ENCODE measurements at regions of chr1 and their contacts with region 1.

Region 1: GRCh38 chr1:185317034-185317885 is at the start of gene IVNS1ABP:
- DNase-seq: peak; percentile 94 to 97 (median 96)
- H3K4me3 ChIP-seq: peak within 1 kb of the TSS; percentile 82 to 90
- H3K4me3 Mint-ChIP-seq: peak within 1 kb of the TSS; percentile 93 to 99 (median 97)
- H3K27ac ChIP-seq: peak within 1 kb of the TSS; percentile 99
- H3K27ac Mint-ChIP-seq: peak within 1 kb of the TSS; percentile 99 to 100 (median 99)
- H3K4me1 ChIP-seq: peaks cover 47% of the 10 kb centered on the region
- H3K4me1 Mint-ChIP-seq: peaks cover 29 to 58% (median 47%) of the 10 kb centered on the region in 4 donors
- H3K27me3 ChIP-seq: no peaks in the 10 kb centered on the region
- H3K27me3 Mint-ChIP-seq: no peaks in the 10 kb centered on the region
- total RNA-seq, gene IVNS1ABP: 179 to 187 TPM

Region 2: GRCh38 chr1:184399192-184399847 is 917.9 kb before region 1 on chr1:
- CTCF ChIA-PET with region 1: no interaction called
- POLR2A ChIA-PET with region 1: no interaction called
- intact Hi-C with region 1: no loop called
- DNase-seq: no peak
- H3K4me3 ChIP-seq: no peak overlapping the region
- H3K4me3 Mint-ChIP-seq: no peak overlapping the region
- H3K27ac ChIP-seq: no peak overlapping the region
- H3K27ac Mint-ChIP-seq: no peak overlapping the region
- H3K4me1 ChIP-seq: no peaks in the 10 kb centered on the region
- H3K4me1 Mint-ChIP-seq: no peaks in the 10 kb centered on the region
- H3K27me3 ChIP-seq: peaks cover 3% of the 10 kb centered on the region
- H3K27me3 Mint-ChIP-seq: peaks cover 12 to 23% of the 10 kb centered on the region in 2 donors

Region 3: DNA sequence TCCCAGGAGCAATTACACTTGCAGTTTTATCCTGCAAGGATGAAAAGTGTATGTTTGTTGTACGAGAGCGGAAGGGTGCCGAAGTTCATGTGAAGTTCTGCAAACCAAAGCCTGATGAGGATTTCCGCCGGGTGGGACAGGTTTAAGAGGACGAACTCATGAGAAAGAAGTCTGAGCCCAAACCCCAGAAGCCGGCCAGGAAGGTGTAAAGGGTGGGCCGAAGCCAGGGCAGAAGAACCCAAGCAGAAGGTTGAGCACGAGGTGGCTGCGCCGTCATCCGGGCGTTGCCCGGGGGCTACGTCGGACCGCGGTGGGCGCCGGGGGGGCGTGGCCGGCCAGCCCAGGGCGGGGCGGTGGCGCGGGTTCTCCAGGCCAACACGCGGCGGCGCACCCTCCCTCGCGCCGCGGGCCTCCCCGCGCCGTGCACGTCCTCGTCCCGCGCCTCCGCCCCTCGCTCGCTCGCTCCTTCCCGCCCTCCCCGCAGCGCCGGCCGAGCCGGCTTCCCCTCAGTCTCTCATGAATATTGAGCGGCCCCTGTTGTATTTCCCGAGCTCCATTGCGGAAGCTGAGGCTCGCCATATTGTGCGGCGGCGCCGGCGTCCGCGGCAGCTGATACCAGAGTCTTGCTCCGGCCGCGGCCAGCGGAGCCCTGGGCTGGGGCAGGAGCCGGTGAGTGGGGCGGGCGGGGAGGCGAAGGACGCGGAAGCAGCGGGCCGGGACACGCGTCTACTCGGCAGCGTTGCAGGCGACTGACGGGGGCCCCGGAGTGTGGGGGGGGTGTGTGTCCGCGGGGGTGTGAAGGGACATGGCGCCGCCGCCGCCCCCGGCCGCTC is 272.1 kb before region 1 on chr1 and contains the start of gene RNF2:
- CTCF ChIA-PET with region 1: no interaction called
- POLR2A ChIA-PET with region 1: interaction called, 5 read pairs
- intact Hi-C with region 1: loop called (anchors 1 kb)
- DNase-seq: peak; percentile 76 to 88 (median 83)
- H3K4me3 ChIP-seq: peak within 1 kb of the TSS; percentile 72 to 78
- H3K4me3 Mint-ChIP-seq: peak within 1 kb of the TSS; percentile 94 to 99 (median 96)
- H3K27ac ChIP-seq: peak within 1 kb of the TSS; percentile 71
- H3K27ac Mint-ChIP-seq: peak within 1 kb of the TSS; percentile 88 to 98 (median 96)
- H3K4me1 ChIP-seq: peaks cover 31% of the 10 kb centered on the region
- H3K4me1 Mint-ChIP-seq: peaks cover 31 to 53% (median 43%) of the 10 kb centered on the region in 4 donors
- H3K27me3 ChIP-seq: no peaks in the 10 kb centered on the region
- H3K27me3 Mint-ChIP-seq: no peaks in the 10 kb centered on the region
- total RNA-seq, gene RNF2: 27.0 TPM

Region 4: GRCh38 chr1:185257947-185258203 is 59.4 kb before region 1 on chr1:
- CTCF ChIA-PET with region 1: no interaction called
- POLR2A ChIA-PET with region 1: interaction called, 13 read pairs
- intact Hi-C with region 1: no loop called
- DNase-seq: no peak
- H3K4me3 ChIP-seq: no peak overlapping the region
- H3K4me3 Mint-ChIP-seq: peak overlapping the region in 7 of 8 donors; percentile 35 to 77 (median 59)
- H3K27ac ChIP-seq: no peak overlapping the region
- H3K27ac Mint-ChIP-seq: peak overlapping the region in 3 of 7 donors; percentile 23 to 68 (median 32)
- H3K4me1 ChIP-seq: peaks cover 14% of the 10 kb centered on the region
- H3K4me1 Mint-ChIP-seq: peaks cover 5 to 25% (median 15%) of the 10 kb centered on the region in 4 donors
- H3K27me3 ChIP-seq: no peaks in the 10 kb centered on the region
- H3K27me3 Mint-ChIP-seq: no peaks in the 10 kb centered on the region

Region 5: GRCh38 chr1:185338719-185339622 is 21.7 kb after region 1 on chr1:
- CTCF ChIA-PET with region 1: interaction called, 11 read pairs
- POLR2A ChIA-PET with region 1: interaction called, 64 read pairs
- intact Hi-C with region 1: loop called (anchors 1 kb)
- DNase-seq: peak; percentile 50 to 62 (median 54)
- H3K4me3 ChIP-seq: peak overlapping the region in 1 of 2 donors; percentile 10
- H3K4me3 Mint-ChIP-seq: peak overlapping the region in 7 of 8 donors; percentile 21 to 88 (median 64)
- H3K27ac ChIP-seq: peak overlapping the region; percentile 25
- H3K27ac Mint-ChIP-seq: peak overlapping the region; percentile 62 to 91 (median 85)
- H3K4me1 ChIP-seq: peaks cover 37% of the 10 kb centered on the region
- H3K4me1 Mint-ChIP-seq: peaks cover 25 to 40% (median 32%) of the 10 kb centered on the region in 4 donors
- H3K27me3 ChIP-seq: no peaks in the 10 kb centered on the region
- H3K27me3 Mint-ChIP-seq: no peaks in the 10 kb centered on the region

Region 6: GRCh38 chr1:185566995-185567394 is 249.7 kb after region 1 on chr1:
- CTCF ChIA-PET with region 1: interaction called, 34 read pairs
- POLR2A ChIA-PET with region 1: interaction called, 149 read pairs
- intact Hi-C with region 1: loop called (anchors 1 kb)
- DNase-seq: peak; percentile 85 to 94 (median 91)
- H3K4me3 ChIP-seq: peak overlapping the region in 1 of 2 donors; percentile 21
- H3K4me3 Mint-ChIP-seq: peak overlapping the region; percentile 26 to 87 (median 75)
- H3K27ac ChIP-seq: peak overlapping the region; percentile 80
- H3K27ac Mint-ChIP-seq: peak overlapping the region; percentile 94 to 100 (median 99)
- H3K4me1 ChIP-seq: peaks cover 81% of the 10 kb centered on the region
- H3K4me1 Mint-ChIP-seq: peaks cover 62 to 91% (median 75%) of the 10 kb centered on the region in 4 donors
- H3K27me3 ChIP-seq: no peaks in the 10 kb centered on the region
- H3K27me3 Mint-ChIP-seq: no peaks in the 10 kb centered on the region

Region 7: DNA sequence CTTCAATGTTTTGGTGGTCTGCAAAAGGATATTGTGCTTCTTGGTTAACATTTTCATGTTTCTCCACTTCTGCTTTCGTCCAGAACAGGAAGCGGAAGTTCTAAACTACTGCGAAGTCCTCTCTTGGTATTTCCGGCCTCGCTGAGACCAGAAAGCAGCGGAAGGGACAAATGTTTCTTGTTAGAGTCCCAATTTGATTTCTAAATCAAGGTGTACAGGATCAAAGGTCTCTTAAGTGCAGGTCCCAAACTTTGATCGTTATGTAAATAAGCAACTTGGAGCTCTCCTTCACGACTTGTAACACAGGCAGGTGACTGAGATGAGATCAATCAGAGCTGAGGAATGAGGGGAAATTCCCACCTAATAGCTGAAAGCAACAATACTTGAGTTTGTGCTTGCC is 376.8 kb after region 1 on chr1:
- CTCF ChIA-PET with region 1: interaction called, 3 read pairs
- POLR2A ChIA-PET with region 1: interaction called, 31 read pairs
- intact Hi-C with region 1: loop called (anchors 1 kb)
- DNase-seq: peak in 3 of 5 donors; percentile 12 to 24 (median 17)
- H3K4me3 ChIP-seq: peak overlapping the region; percentile 4 to 53
- H3K4me3 Mint-ChIP-seq: peak overlapping the region; percentile 80 to 91 (median 86)
- H3K27ac ChIP-seq: peak overlapping the region; percentile 40
- H3K27ac Mint-ChIP-seq: peak overlapping the region; percentile 84 to 94 (median 92)
- H3K4me1 ChIP-seq: peaks cover 20% of the 10 kb centered on the region
- H3K4me1 Mint-ChIP-seq: peaks cover 13 to 19% (median 16%) of the 10 kb centered on the region in 4 donors
- H3K27me3 ChIP-seq: no peaks in the 10 kb centered on the region
- H3K27me3 Mint-ChIP-seq: peaks cover 6 to 8% of the 10 kb centered on the region in 2 donors

Region 8: GRCh38 chr1:185957441-185958363 is 640.4 kb after region 1 on chr1:
- CTCF ChIA-PET with region 1: no interaction called
- POLR2A ChIA-PET with region 1: no interaction called
- intact Hi-C with region 1: no loop called
- DNase-seq: no peak
- H3K4me3 ChIP-seq: no peak overlapping the region
- H3K4me3 Mint-ChIP-seq: no peak overlapping the region
- H3K27ac ChIP-seq: no peak overlapping the region
- H3K27ac Mint-ChIP-seq: no peak overlapping the region
- H3K4me1 ChIP-seq: no peaks in the 10 kb centered on the region
- H3K4me1 Mint-ChIP-seq: no peaks in the 10 kb centered on the region
- H3K27me3 ChIP-seq: no peaks in the 10 kb centered on the region
- H3K27me3 Mint-ChIP-seq: peaks cover 1 to 7% of the 10 kb centered on the region in 2 donors

Measured in CD4-positive, alpha-beta memory T cell (primary cell).